Spleen (tissue), 13 donors: ENCODE measurements at regions of chr19 and their contacts with region 1.

Region 1: DNA sequence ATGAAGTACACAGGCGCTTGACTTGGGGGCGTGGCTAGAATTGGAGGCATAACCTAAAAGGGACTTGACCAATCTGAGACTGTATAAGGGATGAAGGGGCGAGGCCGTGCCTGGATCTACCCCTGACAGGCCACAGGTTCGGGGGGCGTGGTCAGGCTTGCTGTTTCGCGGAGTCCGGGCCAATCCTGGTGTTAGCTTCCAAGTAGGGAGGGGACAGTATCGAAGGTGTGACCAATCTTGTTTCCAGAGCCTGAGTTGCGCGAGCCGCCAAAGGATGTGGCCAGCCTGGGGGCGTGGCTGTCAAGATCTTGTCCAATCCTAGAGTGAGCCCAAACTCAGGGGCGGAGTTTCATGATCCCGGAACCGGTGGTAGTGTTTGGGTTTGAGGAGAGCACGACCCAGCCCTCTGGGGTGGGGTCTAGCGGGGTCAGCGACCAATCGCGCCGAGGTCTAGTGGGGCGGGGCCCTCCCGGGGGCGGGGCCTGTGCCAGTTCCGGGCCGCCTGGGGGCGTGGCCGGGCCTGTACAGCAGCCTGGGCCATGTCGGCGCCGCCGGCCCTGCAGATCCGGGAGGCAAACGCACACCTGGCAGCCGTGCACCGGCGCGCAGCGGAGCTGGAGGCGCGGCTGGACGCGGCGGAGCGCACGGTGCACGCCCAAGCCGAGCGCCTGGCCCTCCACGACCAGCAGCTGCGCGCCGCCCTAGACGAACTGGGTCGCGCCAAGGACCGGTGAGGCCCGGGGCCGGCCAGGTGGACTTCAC is at the start of gene VMAC:
- DNase-seq: peak; percentile 100
- H3K4me3 ChIP-seq: peak within 1 kb of the TSS; percentile 78 to 98 (median 91)
- H3K27ac ChIP-seq: peak within 1 kb of the TSS; percentile 84 to 97 (median 92)
- H3K4me1 ChIP-seq: peaks cover 16 to 78% (median 36%) of the 10 kb centered on the region in 6 donors
- H3K27me3 ChIP-seq: no peaks in the 10 kb centered on the region
- CTCF ChIP-seq: no peak
- POLR2A ChIP-seq: no peak
- total RNA-seq, gene VMAC: 8.5 to 15.9 (median 12.5) TPM

Region 2: GRCh38 chr19:5947435-5947834 is 42.9 kb after region 1 on chr19:
- intact Hi-C with region 1: no loop called
- DNase-seq: no peak
- H3K4me3 ChIP-seq: peak overlapping the region in 2 of 8 donors; percentile 0 to 46
- H3K27ac ChIP-seq: peak overlapping the region in 7 of 8 donors; percentile 72 to 87 (median 84)
- H3K4me1 ChIP-seq: peaks cover 36 to 82% (median 62%) of the 10 kb centered on the region in 6 donors
- H3K27me3 ChIP-seq: no peaks in the 10 kb centered on the region
- CTCF ChIP-seq: no peak
- POLR2A ChIP-seq: no peak

Region 3: GRCh38 chr19:5967994-5968430 is 63.5 kb after region 1 on chr19:
- intact Hi-C with region 1: loop called (anchors 10 kb)
- DNase-seq: peak; percentile 73
- H3K4me3 ChIP-seq: peak overlapping the region in 2 of 8 donors; percentile 13 to 45
- H3K27ac ChIP-seq: peak overlapping the region; percentile 22 to 90 (median 82)
- H3K4me1 ChIP-seq: peaks cover 38 to 100% (median 91%) of the 10 kb centered on the region in 6 donors
- H3K27me3 ChIP-seq: no peaks in the 10 kb centered on the region
- CTCF ChIP-seq: peak; percentile 73 to 92 (median 87)
- POLR2A ChIP-seq: no peak

Region 4: GRCh38 chr19:6125571-6125989 is 221.0 kb after region 1 on chr19:
- intact Hi-C with region 1: no loop called
- DNase-seq: no peak
- H3K4me3 ChIP-seq: no peak overlapping the region
- H3K27ac ChIP-seq: no peak overlapping the region
- H3K4me1 ChIP-seq: no peaks in the 10 kb centered on the region
- H3K27me3 ChIP-seq: peaks cover 0 to 5% (median 0%) of the 10 kb centered on the region in 7 donors
- CTCF ChIP-seq: peak; percentile 81 to 96 (median 94)
- POLR2A ChIP-seq: no peak